Activated T-helper 2 cell treated with anti-CD3 and anti-CD28 coated beads, Interferon-gamma antibody, Interleukin-2, Interleukin-4, amounts not matched to agents 10 μg/mL and 5 μg/mL and 100 μg/mL, durations not matched to agents 14 hours and 24 hours and 36 hours (primary cell): ENCODE measurements at regions of chr18 and their contacts with region 1.

Region 1: DNA sequence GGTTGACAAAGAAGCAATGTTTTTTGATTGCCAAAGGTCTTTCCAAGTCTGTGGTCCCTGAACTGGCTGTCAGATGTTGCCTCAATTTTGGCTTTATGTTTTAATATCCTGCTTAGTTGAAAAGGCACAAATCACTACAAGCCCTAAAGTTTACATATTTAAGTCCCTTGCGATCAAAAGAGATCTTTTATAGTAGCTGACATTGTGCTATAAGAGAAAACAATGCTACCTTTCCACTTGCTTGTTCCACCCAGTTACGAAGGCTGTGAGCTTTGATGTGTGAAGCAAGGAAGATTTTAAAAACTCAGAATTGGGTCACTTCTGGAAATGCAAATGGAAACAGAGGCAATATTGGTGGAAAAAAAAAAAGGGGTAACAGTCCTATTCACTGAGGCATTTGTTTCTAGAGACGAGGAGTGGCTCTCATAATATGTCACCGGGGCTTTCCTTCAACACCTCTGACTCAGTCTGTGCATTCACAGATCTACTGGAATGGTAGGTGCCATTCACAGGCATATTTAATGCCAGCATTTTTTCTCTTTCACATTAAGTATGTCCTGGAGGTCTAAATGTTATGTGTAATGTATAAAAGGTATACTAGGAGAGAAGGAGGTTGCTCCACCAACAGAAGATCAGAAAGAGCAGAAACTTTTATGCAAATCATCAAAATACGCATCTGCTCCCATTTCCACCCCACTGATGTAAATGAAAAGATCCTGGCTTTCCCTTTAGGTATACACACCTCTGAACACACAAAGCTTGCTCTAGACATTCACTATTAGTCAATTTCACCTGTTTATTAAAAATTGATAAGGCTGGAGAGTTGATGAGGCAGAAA is 91.8 kb downstream of the TGIF1 start:
- DNase-seq: no peak
- H3K4me3 Mint-ChIP-seq: no peak overlapping the region
- H3K27ac Mint-ChIP-seq: peak overlapping the region; percentile 42
- H3K4me1 Mint-ChIP-seq: peaks cover 15% of the 10 kb centered on the region
- H3K27me3 Mint-ChIP-seq: peaks cover 8% of the 10 kb centered on the region

Region 2: DNA sequence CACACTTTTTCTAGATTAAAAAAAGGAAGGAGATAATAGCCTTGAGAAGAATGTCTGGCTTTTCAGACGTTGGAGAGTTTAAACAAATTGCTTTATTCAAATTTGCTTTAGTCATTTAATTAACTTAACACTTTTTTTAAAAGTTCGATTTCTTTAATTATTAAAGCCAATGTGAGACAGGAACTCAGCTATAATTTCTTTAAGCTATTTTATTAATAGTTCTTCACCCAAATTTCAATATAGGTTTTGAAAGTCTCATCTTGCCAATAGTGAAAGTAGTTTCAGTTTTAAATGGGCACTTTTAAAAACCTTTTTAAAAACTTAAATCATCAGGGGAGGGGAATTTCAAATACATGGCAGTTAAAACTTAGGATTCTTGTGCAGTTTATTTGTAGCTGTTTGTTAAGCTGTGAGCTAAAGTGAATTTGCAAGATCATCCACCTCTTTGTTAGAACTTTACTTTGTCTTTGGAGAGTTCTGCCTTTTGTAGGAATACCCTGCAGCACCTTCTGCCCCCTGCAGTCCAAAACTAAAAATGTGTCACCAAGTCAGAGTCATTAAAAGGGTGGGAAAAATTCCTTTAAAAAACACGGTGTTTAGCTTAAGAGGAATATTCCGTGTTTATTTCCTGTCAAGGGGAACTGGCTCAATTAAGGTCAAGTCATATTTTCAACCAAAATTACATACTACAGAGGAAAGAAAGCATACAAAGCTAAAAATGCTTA is 87.2 kb before region 1 on chr18:
- intact Hi-C with region 1: loop called (anchors 5 kb)
- DNase-seq: no peak
- H3K4me3 Mint-ChIP-seq: peak overlapping the region; percentile 86
- H3K27ac Mint-ChIP-seq: peak overlapping the region; percentile 97
- H3K4me1 Mint-ChIP-seq: peaks cover 50% of the 10 kb centered on the region
- H3K27me3 Mint-ChIP-seq: no peaks in the 10 kb centered on the region

Region 3: GRCh38 chr18:3525870-3526420 is 15.8 kb before region 1 on chr18:
- intact Hi-C with region 1: loop called (anchors 1 kb)
- DNase-seq: peak; percentile 45
- H3K4me3 Mint-ChIP-seq: no peak overlapping the region
- H3K27ac Mint-ChIP-seq: peak overlapping the region; percentile 39
- H3K4me1 Mint-ChIP-seq: peaks cover 16% of the 10 kb centered on the region
- H3K27me3 Mint-ChIP-seq: peaks cover 6% of the 10 kb centered on the region

Region 4: GRCh38 chr18:3585656-3586509 is 44.1 kb after region 1 on chr18:
- intact Hi-C with region 1: loop called (anchors 5 kb)
- DNase-seq: peak; percentile 57
- H3K4me3 Mint-ChIP-seq: no peak overlapping the region
- H3K27ac Mint-ChIP-seq: peak overlapping the region; percentile 80
- H3K4me1 Mint-ChIP-seq: peaks cover 36% of the 10 kb centered on the region
- H3K27me3 Mint-ChIP-seq: no peaks in the 10 kb centered on the region